B cell (primary cell): ENCODE measurements at regions of chr17 and their contacts with region 1.

Region 1: GRCh38 chr17:2380226-2380922 is 20.5 kb downstream of the MNT start:
- DNase-seq: no peak
- ATAC-seq: no peak
- H3K4me3 ChIP-seq: no peak overlapping the region
- H3K4me3 Mint-ChIP-seq: no peak overlapping the region
- H3K27ac ChIP-seq: no peak overlapping the region
- H3K27ac Mint-ChIP-seq: no peak overlapping the region
- H3K4me1 ChIP-seq: peaks cover 0 to 4% of the 10 kb centered on the region in 2 donors
- H3K4me1 Mint-ChIP-seq: no peaks in the 10 kb centered on the region
- H3K27me3 ChIP-seq: no peaks in the 10 kb centered on the region
- H3K27me3 Mint-ChIP-seq: no peaks in the 10 kb centered on the region
- CTCF ChIP-seq: no peak

Region 2: DNA sequence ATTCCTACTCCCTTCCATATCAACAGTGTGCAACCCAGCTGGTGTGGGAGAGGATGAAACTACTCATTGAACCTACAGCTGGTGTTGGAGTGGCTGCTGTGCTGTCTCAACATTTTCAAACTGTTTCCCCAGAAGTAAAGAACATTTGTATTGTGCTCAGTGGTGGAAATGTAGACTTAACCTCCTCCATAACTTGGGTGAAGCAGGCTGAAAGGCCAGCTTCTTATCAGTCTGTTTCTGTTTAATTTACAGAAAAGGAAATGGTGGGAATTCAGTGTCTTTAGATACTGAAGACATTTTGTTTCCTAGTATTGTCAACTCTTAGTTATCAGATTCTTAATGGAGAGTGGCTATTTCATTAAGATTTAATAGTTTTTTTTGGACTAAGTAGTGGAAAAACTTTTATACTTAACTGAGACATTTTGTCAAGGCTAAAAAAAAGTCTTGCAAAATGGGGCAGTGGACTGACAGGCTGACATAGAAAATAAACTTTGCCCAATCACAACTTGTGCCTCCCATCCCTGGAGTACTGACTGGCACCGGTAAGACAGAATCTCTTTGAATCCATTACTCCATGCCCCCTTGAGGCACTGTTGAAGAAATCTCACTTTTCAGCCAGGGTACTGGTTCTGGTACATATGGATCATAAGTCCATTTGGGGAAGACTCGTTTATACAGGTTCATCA is 56.6 kb before region 1 on chr17:
- CTCF ChIA-PET with region 1: no interaction called
- POLR2A ChIA-PET with region 1: no interaction called
- intact Hi-C with region 1: no loop called
- DNase-seq: no peak
- ATAC-seq: no peak
- H3K4me3 ChIP-seq: no peak overlapping the region
- H3K4me3 Mint-ChIP-seq: no peak overlapping the region
- H3K27ac ChIP-seq: no peak overlapping the region
- H3K27ac Mint-ChIP-seq: no peak overlapping the region
- H3K4me1 ChIP-seq: no peaks in the 10 kb centered on the region
- H3K4me1 Mint-ChIP-seq: no peaks in the 10 kb centered on the region
- H3K27me3 ChIP-seq: no peaks in the 10 kb centered on the region
- H3K27me3 Mint-ChIP-seq: no peaks in the 10 kb centered on the region
- CTCF ChIP-seq: no peak

Region 3: GRCh38 chr17:2401426-2402221 is 21.2 kb after region 1 on chr17:
- CTCF ChIA-PET with region 1: interaction called, 71 read pairs
- POLR2A ChIA-PET with region 1: interaction called, 10 read pairs
- intact Hi-C with region 1: loop called (anchors 1 kb)
- DNase-seq: peak; percentile 96
- ATAC-seq: peak; percentile 57
- H3K4me3 ChIP-seq: peak overlapping the region; percentile 64 to 99 (median 94)
- H3K4me3 Mint-ChIP-seq: peak overlapping the region; percentile 99
- H3K27ac ChIP-seq: peak overlapping the region; percentile 95 to 98
- H3K27ac Mint-ChIP-seq: peak overlapping the region; percentile 99
- H3K4me1 ChIP-seq: peaks cover 32 to 36% of the 10 kb centered on the region in 2 donors
- H3K4me1 Mint-ChIP-seq: peaks cover 38% of the 10 kb centered on the region
- H3K27me3 ChIP-seq: no peaks in the 10 kb centered on the region
- H3K27me3 Mint-ChIP-seq: no peaks in the 10 kb centered on the region
- CTCF ChIP-seq: no peak

Region 4: GRCh38 chr17:2610195-2611175 is 230.1 kb after region 1 on chr17:
- CTCF ChIA-PET with region 1: no interaction called
- POLR2A ChIA-PET with region 1: no interaction called
- intact Hi-C with region 1: no loop called
- DNase-seq: no peak
- ATAC-seq: no peak
- H3K4me3 ChIP-seq: no peak overlapping the region
- H3K4me3 Mint-ChIP-seq: no peak overlapping the region
- H3K27ac ChIP-seq: no peak overlapping the region
- H3K27ac Mint-ChIP-seq: no peak overlapping the region
- H3K4me1 ChIP-seq: peaks cover 11% of the 10 kb centered on the region in 2 donors
- H3K4me1 Mint-ChIP-seq: peaks cover 50% of the 10 kb centered on the region
- H3K27me3 ChIP-seq: no peaks in the 10 kb centered on the region
- H3K27me3 Mint-ChIP-seq: no peaks in the 10 kb centered on the region
- CTCF ChIP-seq: no peak